GM18951 (cell line): ENCODE measurements at regions of chr15 and their contacts with region 1.

Region 1: DNA sequence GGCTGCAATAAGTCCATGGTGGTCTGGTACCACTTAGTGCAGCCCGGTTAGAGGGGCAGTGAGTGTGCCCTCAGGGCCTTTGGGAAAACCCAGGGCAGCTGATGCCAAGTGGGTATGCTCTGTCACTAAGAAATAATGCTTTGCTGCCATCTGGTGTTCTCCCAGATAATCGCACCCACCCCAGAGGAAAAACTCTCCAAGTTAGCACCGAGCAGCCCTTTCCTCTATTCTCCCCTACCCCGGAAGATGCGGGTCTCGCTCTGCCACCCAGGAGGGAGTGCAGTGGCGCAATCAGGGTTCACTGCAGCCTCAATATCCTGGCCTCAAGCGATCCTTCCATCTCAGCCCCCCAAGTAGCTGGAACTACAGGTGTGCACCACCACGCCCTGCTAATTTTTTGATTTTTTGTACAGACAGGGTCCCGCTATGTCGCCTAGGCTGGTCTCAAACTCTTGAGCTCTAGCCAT is 21.3 kb upstream of the DAPK2 start:
- POLR2A ChIP-seq: no peak

Region 2: DNA sequence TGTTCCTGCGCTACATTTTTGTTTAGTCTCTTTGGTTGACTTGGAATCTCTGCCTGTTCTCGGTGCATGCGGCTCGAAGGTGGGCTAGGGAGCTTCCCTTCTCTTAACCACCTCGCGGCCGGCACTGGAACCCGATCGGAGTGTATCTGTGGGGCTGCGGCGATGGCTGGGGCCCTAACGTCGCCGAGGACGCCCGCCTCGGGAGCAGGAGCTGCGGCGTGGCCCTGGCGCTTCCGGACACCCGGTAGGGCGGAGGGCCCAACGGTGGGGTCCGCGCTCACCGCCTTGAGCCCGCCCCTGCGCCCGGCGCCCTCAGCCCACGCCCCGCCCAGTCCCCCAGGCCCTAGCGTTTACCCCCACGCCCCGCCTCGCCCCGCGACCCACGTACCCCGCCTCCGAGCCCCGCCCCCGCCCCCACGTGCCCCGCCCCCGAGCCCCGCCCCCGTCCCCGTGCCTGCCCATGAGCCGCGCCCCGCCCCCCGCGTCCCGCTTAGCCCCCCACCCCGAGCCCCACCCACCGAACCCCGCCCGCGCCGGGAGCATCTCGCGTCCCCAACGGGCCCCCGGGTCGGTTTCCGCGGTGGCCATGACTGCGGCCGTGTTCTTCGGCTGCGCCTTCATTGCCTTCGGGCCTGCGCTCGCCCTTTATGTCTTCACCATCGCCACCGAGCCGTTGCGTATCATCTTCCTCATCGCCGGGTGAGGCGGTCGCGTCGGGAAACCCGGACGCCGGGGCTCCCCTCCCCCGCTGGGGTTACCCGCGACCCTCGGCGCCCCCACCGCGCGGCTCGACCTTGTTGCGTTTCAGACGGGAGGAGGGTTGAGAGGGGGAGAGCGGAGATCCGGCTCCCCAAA is 790.3 kb before region 1 on chr15 and contains the start of gene APH1B:
- in situ Hi-C with region 1: loop called (anchors 25 kb)
- POLR2A ChIP-seq: peak; percentile 77

Region 3: GRCh38 chr15:63466378-63467192 is 601.0 kb before region 1 on chr15:
- in situ Hi-C with region 1: loop called (anchors 25 kb)
- POLR2A ChIP-seq: no peak

Region 4: GRCh38 chr15:63600616-63601025 is 467.0 kb before region 1 on chr15:
- in situ Hi-C with region 1: loop called (anchors 10 kb)
- POLR2A ChIP-seq: peak; percentile 95

Region 5: DNA sequence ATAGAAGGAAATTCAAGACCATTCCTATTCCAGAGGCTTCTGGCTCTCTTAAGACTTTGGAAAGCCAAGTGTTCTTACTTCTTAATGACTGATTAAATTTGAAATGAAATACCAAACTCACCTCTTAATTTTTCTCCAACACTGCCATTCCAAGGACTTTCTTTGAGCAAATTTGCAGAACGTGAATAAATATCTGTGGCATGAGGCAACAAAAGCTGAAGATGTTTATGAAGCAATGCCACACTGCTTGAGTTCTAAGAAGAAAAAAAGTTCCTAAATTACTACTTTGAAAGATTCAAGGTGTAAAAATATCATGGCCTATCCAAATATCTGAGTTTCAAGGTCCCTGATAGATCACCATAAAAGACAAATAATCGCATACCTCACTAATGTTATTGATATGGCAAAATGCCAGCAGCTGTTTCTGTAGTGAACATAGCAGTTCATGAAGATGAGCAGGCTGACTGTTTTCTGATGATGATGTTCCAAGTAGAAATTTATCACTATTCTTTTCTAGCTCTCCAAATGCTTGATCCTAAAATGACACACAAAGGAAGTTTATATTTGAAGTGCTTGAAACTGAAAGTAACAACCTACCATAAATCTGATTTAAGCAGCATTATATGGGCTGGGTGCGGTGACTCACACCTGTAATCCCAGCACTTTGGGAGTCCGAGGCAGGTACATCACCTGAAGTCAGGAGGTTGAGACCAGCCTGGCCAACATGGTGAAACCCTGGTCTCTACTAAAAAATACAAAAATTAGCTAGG is 338.3 kb before region 1 on chr15:
- in situ Hi-C with region 1: loop called (anchors 25 kb)
- POLR2A ChIP-seq: no peak

Region 6: DNA sequence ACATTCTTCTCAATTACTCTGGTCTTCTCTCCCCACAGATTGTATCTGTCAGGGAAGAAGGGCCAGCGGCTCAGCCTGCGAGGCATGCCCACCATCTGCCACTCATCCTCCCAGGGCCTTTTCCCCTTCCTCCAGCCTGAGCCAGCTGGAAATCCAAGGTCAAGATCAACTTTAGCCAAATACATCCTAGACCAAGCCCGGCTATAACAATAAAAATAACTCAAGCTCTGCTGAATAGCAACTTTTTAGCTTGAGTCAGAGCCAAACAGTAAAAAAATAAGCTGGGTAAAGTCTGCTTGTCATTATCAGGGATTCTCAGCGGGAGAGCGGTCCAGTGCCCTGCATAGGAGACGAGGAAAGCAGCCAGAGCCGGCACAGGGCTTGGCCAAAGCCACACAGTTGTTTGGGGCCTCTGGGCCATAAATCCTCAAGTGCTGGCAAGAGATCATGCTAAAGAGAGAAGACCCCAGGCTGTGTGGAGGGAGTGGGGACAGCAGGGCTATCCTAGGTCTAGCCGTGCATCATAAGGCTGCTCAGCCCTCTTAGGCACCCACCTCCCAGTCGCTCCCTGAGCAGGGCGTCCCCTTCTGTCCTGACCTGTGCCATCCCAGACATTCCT is 157.7 kb before region 1 on chr15:
- in situ Hi-C with region 1: no loop called
- POLR2A ChIP-seq: no peak

Region 7: GRCh38 chr15:63945007-63945788 is 122.4 kb before region 1 on chr15:
- in situ Hi-C with region 1: no loop called
- POLR2A ChIP-seq: no peak